ENCODE measurements at regions of chr7 and their contacts with region 1.

Region 1: GRCh38 chr7:786472-787255 is 45.6 kb upstream of the SUN1 start:
- DNase-seq: peak; percentile 66 to 89 (median 75)
- H3K4me3 ChIP-seq: no peak overlapping the region
- H3K27ac ChIP-seq: no peak overlapping the region
- H3K4me1 ChIP-seq: no peaks in the 10 kb centered on the region
- H3K27me3 ChIP-seq: no peaks in the 10 kb centered on the region
- CTCF ChIP-seq: peak; percentile 72 to 93 (median 86)
- POLR2A ChIP-seq: no peak

Region 2: DNA sequence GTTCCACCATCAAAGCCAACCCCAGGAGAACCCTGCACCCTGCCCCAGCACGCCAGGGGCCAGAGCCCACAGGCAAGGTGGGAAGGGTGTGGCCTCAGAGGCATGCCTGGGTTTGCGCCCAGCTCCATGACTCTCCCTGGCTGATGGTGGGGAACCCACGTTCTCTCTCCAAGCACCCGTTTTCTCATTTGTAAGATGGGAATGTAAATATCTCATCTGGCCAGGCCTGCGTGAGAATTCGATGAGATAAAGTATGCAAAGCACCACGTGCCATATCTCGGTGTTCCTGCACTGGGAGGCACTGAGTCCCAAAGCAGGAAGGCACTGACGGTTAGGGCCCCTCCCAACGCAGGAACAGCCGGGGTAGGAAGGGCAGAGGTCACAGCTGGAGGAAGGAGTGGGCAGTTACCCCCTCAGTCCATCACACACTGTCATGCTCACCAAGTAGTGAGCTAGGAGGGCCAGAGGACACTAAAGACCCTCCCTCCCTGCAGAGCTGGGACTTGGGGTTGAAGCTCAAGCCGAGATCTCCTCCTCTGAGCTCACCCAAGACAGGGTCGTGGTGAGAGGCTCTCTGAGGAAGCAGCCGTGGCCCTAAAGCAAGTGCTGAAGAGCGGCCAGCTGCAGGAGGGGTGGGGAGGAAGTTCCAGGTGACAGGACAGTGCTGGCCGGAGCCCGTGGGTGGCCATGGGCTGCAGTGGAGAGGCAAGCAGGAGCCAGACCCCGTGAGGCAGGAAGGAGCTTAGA is 87.4 kb before region 1 on chr7:
- intact Hi-C with region 1: no loop called
- DNase-seq: peak in 4 of 7 donors; percentile 25 to 59 (median 26)
- H3K4me3 ChIP-seq: no peak overlapping the region
- H3K27ac ChIP-seq: peak overlapping the region in 1 of 5 donors; percentile 49
- H3K4me1 ChIP-seq: no peaks in the 10 kb centered on the region
- H3K27me3 ChIP-seq: no peaks in the 10 kb centered on the region
- CTCF ChIP-seq: no peak
- POLR2A ChIP-seq: no peak

Region 3: GRCh38 chr7:732094-732541 is 54.5 kb before region 1 on chr7:
- intact Hi-C with region 1: no loop called
- DNase-seq: peak; percentile 38 to 79 (median 70)
- H3K4me3 ChIP-seq: no peak overlapping the region
- H3K27ac ChIP-seq: peak overlapping the region in 1 of 5 donors; percentile 11
- H3K4me1 ChIP-seq: peaks cover 6 to 10% of the 10 kb centered on the region in 2 donors
- H3K27me3 ChIP-seq: no peaks in the 10 kb centered on the region
- CTCF ChIP-seq: peak in 3 of 6 experiments; percentile 18 to 43 (median 39)
- POLR2A ChIP-seq: no peak

Region 4: DNA sequence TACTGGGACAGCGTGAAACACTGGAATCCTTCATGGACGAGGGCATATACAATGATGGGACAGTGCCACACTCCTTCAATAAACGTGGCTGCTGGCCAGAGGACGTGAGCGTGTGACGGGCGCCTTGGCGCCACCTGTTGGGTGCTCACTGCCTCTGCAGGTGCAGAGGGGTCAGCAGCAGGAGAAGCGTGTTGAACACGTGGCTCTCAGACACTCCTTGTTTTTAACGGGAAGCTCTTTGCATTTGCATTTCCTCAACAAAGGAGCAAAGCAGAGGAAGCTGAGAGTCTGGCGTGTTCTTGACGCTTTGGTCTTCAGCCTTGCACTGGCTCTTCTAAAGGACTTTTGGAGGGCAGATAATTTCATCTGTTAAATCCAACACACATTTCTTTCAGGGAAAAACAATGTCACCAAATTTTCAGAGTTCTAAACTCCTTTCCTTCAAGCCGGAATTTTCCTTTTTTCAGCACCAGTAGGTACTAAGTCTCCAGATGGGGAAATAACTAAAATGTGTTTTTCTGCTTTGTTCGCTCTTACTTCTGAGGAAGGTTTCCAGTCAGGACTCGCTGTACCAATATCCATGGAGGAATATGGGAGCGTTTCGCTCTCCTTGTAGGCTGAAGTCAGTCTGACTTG is 86.8 kb after region 1 on chr7:
- intact Hi-C with region 1: loop called (anchors 2 kb)
- DNase-seq: peak; percentile 83 to 95 (median 90)
- H3K4me3 ChIP-seq: no peak overlapping the region
- H3K27ac ChIP-seq: peak overlapping the region in 3 of 5 donors; percentile 54 to 62 (median 55)
- H3K4me1 ChIP-seq: peaks cover 15 to 26% of the 10 kb centered on the region in 2 donors
- H3K27me3 ChIP-seq: no peaks in the 10 kb centered on the region
- CTCF ChIP-seq: peak; percentile 82 to 95 (median 94)
- POLR2A ChIP-seq: no peak

Region 5: GRCh38 chr7:954330-955238 is 167.9 kb after region 1 on chr7 and contains the start of gene ADAP1:
- intact Hi-C with region 1: loop called in 1 of 2 experiments (anchors 10 kb)
- DNase-seq: peak in 2 of 7 donors; percentile 18 to 53
- H3K4me3 ChIP-seq: peak within 1 kb of the TSS in 2 of 4 donors; percentile 27 to 68
- H3K27ac ChIP-seq: peak within 1 kb of the TSS in 2 of 5 donors; percentile 33 to 82
- H3K4me1 ChIP-seq: peaks cover 0 to 8% of the 10 kb centered on the region in 2 donors
- H3K27me3 ChIP-seq: peaks cover 14% of the 10 kb centered on the region
- CTCF ChIP-seq: peak in 2 of 6 experiments; percentile 3 to 42
- POLR2A ChIP-seq: no peak
- total RNA-seq, gene ADAP1: 2.0 to 60.2 (median 11.5) TPM

Measured in adrenal gland (tissue), 19 donors.